ENCODE measurements at regions of chrX and their contacts with region 1.

Region 1: GRCh38 chrX:18984381-18985185 is 669 bp upstream of the PHKA2 start:
- DNase-seq: peak; percentile 91
- ATAC-seq: peak; percentile 90
- H3K4me3 Mint-ChIP-seq: peak overlapping the region; percentile 84
- H3K27ac Mint-ChIP-seq: peak overlapping the region; percentile 93
- H3K4me1 Mint-ChIP-seq: peaks cover 11% of the 10 kb centered on the region
- H3K27me3 Mint-ChIP-seq: no peaks in the 10 kb centered on the region

Region 2: GRCh38 chrX:18354369-18355223 is 630.0 kb before region 1 on chrX and contains the start of gene SCML2:
- CTCF ChIA-PET with region 1: interaction called, 5 read pairs
- POLR2A ChIA-PET with region 1: no interaction called
- intact Hi-C with region 1: loop called in 1 of 2 experiments (anchors 2 kb)
- DNase-seq: peak; percentile 62
- ATAC-seq: peak; percentile 69
- H3K4me3 Mint-ChIP-seq: peak within 1 kb of the TSS; percentile 68
- H3K27ac Mint-ChIP-seq: no peak within 1 kb of the TSS
- H3K4me1 Mint-ChIP-seq: peaks cover 4% of the 10 kb centered on the region
- H3K27me3 Mint-ChIP-seq: peaks cover 2% of the 10 kb centered on the region
- total RNA-seq, gene SCML2: 2.9 to 3.1 TPM

Region 3: GRCh38 chrX:18674788-18675735 is 309.5 kb before region 1 on chrX:
- CTCF ChIA-PET with region 1: no interaction called
- POLR2A ChIA-PET with region 1: no interaction called
- intact Hi-C with region 1: loop called (anchors 1 to 10 kb)
- DNase-seq: peak; percentile 82
- ATAC-seq: peak; percentile 81
- H3K4me3 Mint-ChIP-seq: peak overlapping the region; percentile 63
- H3K27ac Mint-ChIP-seq: peak overlapping the region; percentile 80
- H3K4me1 Mint-ChIP-seq: peaks cover 6% of the 10 kb centered on the region
- H3K27me3 Mint-ChIP-seq: no peaks in the 10 kb centered on the region

Region 4: DNA sequence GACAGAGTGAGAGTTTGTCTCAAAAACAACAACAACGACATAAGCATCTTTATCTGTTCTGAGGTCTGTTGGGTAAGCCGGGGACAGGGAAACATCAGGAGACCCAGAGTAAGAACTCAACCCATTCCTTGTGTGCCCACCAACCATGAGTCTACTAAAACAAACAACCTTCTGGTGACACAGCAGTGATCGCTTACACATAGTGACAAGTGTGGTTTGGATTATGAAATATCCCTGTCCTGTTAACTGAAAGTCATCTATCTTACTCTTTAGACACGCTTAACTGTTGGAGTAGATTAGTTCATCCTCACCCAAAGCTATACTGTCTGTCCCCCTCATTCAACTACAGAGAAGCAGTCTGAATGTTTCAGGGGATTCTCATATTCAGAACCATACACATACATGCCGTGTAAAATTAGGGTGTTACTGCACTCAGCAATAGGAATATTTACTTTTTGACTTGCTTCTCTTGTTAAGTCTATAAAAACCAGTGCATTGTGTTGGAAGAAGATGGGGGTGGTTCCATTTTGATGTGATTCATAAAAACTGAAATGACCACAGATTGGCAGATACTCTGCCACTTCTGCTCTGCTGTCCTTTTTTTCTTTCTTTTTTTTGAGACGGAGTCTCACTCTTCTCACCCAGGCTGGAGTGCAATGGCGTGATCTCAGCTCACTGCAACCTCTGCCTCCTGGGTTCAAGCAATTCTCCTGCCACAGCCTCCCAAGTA is 28.1 kb before region 1 on chrX:
- CTCF ChIA-PET with region 1: no interaction called
- POLR2A ChIA-PET with region 1: no interaction called
- intact Hi-C with region 1: loop called in 1 of 2 experiments (anchors 2 kb)
- DNase-seq: no peak
- ATAC-seq: no peak
- H3K4me3 Mint-ChIP-seq: no peak overlapping the region
- H3K27ac Mint-ChIP-seq: no peak overlapping the region
- H3K4me1 Mint-ChIP-seq: peaks cover 21% of the 10 kb centered on the region
- H3K27me3 Mint-ChIP-seq: no peaks in the 10 kb centered on the region

Region 5: DNA sequence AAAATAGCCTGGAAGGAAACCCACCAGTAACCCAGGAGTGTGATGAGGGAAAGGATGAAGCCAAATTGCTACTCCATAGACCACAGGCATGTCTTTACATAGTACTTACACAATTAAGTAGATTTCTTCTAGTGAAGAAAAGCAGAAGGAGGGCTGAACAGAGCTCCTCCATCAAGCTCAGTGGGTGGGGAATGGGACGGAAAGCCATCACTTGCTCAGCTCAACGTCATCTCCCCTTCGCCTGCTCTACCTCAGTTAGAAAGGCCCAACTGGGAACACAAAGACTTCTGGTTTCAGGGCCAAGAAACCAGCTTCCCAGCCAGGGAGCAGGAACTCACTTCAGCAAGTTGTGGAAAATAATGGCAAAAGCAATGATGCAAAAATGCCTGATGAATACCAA is 101.1 kb after region 1 on chrX:
- CTCF ChIA-PET with region 1: no interaction called
- POLR2A ChIA-PET with region 1: no interaction called
- intact Hi-C with region 1: no loop called
- DNase-seq: no peak
- ATAC-seq: no peak
- H3K4me3 Mint-ChIP-seq: no peak overlapping the region
- H3K27ac Mint-ChIP-seq: no peak overlapping the region
- H3K4me1 Mint-ChIP-seq: no peaks in the 10 kb centered on the region
- H3K27me3 Mint-ChIP-seq: peaks cover 6% of the 10 kb centered on the region

Region 6: DNA sequence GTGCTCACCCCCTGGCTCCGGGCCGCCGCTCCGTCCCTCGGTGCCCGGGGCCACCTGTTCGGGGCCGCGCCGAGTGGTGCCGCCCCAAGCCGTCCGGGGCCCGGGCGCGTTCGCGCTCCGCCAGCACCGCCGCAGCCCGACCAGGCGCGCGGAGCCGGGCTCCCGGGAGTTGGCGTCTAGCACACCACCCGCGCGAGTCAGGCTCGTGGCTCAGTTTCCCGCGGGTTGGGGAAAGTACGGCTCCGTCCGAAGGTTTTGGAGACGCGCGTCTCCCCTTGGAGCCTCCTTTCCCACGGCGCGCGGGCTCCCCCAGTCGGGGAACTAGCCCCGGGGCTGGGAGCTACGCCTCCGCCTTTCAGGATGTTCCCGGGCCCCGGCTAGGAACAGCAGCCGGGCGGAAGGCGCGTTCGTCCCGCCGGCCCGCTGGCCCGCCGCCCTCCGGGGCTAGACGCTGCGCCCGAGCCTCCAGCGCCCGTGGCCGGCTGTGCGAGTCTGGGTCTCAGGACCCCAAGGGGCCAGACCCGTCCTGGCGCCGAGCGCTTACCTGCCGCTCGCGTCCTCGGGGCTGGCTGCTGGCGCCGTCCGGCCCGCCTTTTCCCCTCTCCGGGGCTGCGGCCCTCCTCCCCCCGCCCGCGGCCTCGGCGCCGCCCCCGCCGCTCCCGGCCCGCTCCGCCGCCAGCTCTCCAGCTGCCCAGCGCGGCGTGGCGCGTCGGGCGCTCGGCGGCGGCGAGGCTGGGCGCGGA is 137.5 kb after region 1 on chrX and contains the start of gene ADGRG2:
- CTCF ChIA-PET with region 1: no interaction called
- POLR2A ChIA-PET with region 1: no interaction called
- intact Hi-C with region 1: no loop called
- DNase-seq: peak; percentile 8
- ATAC-seq: no peak
- H3K4me3 Mint-ChIP-seq: no peak within 1 kb of the TSS
- H3K27ac Mint-ChIP-seq: no peak within 1 kb of the TSS
- H3K4me1 Mint-ChIP-seq: no peaks in the 10 kb centered on the region
- H3K27me3 Mint-ChIP-seq: peaks cover 29% of the 10 kb centered on the region
- total RNA-seq, gene ADGRG2: not detected

Region 7: DNA sequence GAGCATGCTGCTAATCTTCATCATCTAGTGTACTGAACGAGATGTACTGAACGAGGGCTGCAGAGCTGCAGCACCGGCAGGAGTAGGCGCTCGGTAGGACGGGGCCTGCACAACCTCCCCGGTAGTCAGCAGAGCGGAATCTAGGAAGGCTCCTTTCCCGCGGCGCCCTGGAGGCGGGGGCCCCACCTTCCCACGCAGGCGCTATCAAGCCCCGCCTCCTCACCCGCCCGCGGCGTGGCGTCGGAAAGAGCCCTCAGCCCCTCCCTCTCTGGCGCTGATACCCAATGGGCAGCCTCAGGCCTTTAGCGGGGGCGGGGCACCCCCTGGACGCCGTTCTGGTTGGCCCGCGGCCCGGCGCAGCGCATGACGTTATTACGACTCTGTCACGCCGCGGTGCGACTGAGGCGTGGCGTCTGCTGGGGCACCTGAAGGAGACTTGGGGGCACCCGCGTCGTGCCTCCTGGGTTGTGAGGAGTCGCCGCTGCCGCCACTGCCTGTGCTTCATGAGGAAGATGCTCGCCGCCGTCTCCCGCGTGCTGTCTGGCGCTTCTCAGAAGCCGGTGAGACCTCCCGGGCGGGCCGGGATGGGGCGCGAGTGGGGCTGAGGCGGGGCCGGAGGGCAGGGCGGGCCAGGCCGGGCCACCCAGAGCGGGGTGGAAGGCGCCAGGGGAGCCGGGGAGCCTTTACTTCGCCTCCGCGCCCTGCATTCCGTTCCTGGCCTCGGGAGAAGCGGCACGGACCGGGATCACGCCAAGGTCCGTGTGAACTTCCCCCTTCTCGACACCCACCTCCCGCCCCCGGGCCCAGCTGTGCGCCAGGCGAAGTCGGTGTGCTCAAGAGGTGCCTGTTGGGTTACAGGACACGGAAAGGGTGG is 359.2 kb after region 1 on chrX and contains the start of gene PDHA1:
- CTCF ChIA-PET with region 1: no interaction called
- POLR2A ChIA-PET with region 1: no interaction called
- intact Hi-C with region 1: loop called (anchors 1 to 2 kb)
- DNase-seq: peak; percentile 95
- ATAC-seq: peak; percentile 99
- H3K4me3 Mint-ChIP-seq: peak within 1 kb of the TSS; percentile 79
- H3K27ac Mint-ChIP-seq: peak within 1 kb of the TSS; percentile 88
- H3K4me1 Mint-ChIP-seq: peaks cover 27% of the 10 kb centered on the region
- H3K27me3 Mint-ChIP-seq: no peaks in the 10 kb centered on the region
- total RNA-seq, gene PDHA1: 204 to 217 TPM